ENCODE measurements at regions of chr22 and their contacts with region 1.

Region 1: GRCh38 chr22:24165673-24166072 is 15.6 kb upstream of the SUSD2 start:
- DNase-seq: no peak
- H3K4me3 ChIP-seq: no peak overlapping the region
- H3K27ac ChIP-seq: peak overlapping the region in 1 of 4 donors; percentile 57
- H3K4me1 ChIP-seq: peaks cover 0 to 9% (median 5%) of the 10 kb centered on the region in 4 donors
- H3K27me3 ChIP-seq: no peaks in the 10 kb centered on the region
- CTCF ChIP-seq: no peak
- EP300 ChIP-seq: no peak
- POLR2A ChIP-seq: no peak

Region 2: DNA sequence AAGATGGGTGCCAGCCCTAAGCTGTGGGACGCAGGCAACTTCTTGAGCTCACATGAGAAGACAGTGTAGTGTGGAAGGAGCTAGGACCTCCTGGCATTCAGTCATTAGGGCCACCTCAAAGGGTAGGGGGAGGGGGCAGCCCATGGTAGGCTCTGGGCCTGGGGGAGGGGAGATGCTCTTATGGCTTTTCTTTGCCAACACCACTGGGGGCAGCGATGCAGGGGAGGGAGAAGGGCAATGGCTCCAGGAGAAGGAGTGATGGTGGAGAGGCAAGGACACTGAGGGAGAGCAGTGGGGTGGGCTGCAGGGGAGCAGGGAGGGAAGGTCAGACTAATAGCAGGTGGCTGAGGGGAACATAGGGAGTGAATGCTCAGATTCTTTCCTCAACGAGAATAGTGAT is 47.7 kb before region 1 on chr22:
- in situ Hi-C with region 1: no loop called
- intact Hi-C with region 1: loop called (anchors 5 kb)
- DNase-seq: no peak
- H3K4me3 ChIP-seq: no peak overlapping the region
- H3K27ac ChIP-seq: no peak overlapping the region
- H3K4me1 ChIP-seq: no peaks in the 10 kb centered on the region
- H3K27me3 ChIP-seq: no peaks in the 10 kb centered on the region
- CTCF ChIP-seq: no peak
- EP300 ChIP-seq: no peak
- POLR2A ChIP-seq: no peak

Measured in transverse colon (tissue), 4 donors.